Ovary (tissue), 10 donors: ENCODE measurements at regions of chrX and their contacts with region 1.

Region 1: GRCh38 chrX:73447311-73447794 is 500 bp downstream of the CDX4 start:
- DNase-seq: no peak
- H3K4me3 ChIP-seq: no peak overlapping the region
- H3K27ac ChIP-seq: no peak overlapping the region
- H3K4me1 ChIP-seq: no peaks in the 10 kb centered on the region
- H3K27me3 ChIP-seq: no peaks in the 10 kb centered on the region
- CTCF ChIP-seq: no peak
- EP300 ChIP-seq: no peak
- POLR2A ChIP-seq: no peak

Region 2: GRCh38 chrX:73468376-73468775 is 21.0 kb after region 1 on chrX:
- intact Hi-C with region 1: loop called in 1 of 4 experiments (anchors 2 kb)
- DNase-seq: no peak
- H3K4me3 ChIP-seq: no peak overlapping the region
- H3K27ac ChIP-seq: no peak overlapping the region
- H3K4me1 ChIP-seq: no peaks in the 10 kb centered on the region
- H3K27me3 ChIP-seq: no peaks in the 10 kb centered on the region
- CTCF ChIP-seq: no peak
- EP300 ChIP-seq: no peak
- POLR2A ChIP-seq: no peak

Region 3: DNA sequence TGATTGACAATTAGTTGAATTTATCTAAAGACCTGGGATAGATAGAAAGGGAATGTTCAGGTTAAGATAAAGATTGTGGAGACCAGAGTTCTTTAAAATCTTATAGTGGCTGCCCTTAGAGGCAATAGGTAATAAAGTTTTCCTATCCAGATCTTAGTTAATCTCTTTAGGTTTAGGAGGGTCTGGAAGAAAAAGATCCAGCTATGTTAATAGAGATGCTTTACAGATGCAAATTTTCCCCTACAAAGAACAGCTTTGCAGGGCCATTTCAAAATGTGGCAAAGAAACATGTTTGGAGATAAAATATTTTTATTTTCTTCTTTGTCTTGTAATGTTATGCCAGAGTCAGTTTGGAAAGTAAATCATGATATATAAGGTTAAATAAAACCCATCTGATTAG is 61.5 kb after region 1 on chrX:
- intact Hi-C with region 1: loop called in 1 of 4 experiments (anchors 2 kb)
- DNase-seq: no peak
- H3K4me3 ChIP-seq: no peak overlapping the region
- H3K27ac ChIP-seq: no peak overlapping the region
- H3K4me1 ChIP-seq: no peaks in the 10 kb centered on the region
- H3K27me3 ChIP-seq: no peaks in the 10 kb centered on the region
- CTCF ChIP-seq: no peak
- EP300 ChIP-seq: no peak
- POLR2A ChIP-seq: no peak

Region 4: DNA sequence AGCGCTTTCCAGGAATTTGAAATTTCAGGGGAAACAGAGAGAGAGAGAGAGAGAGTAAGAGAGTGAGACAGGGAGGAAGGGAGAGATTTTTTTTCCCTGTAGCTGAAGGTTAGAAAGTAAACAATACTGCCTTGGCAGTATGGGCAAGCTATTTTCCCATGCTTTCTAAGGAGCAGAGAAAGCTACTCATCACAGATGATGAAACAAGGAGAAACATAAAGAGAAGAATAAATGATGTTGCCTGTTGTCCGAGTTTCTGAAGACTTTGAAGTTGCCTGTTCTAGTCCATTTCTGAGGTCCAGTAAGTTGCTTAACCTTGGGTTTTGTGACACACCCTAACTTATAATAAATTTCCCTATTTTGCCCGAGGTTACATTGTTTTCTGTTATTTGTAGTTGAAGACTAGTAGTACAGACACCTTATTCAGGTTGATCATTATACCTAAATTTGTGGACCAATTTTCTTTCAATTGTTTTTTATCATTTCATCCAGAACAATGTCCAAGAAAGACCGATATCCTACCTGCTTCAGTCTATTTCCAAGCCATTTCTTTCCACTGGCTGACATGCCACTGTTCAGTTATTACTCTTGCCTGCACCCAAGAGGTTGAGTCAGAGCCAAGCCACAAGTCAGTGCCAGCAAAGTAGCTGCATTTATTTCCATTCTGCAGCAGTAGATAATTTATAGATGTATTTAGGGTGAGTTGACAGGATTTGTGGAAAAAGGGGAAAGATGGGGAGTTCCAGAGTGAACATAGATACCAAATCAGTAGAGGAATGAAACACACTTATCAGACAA is 924.3 kb after region 1 on chrX:
- intact Hi-C with region 1: no loop called
- DNase-seq: no peak
- H3K4me3 ChIP-seq: no peak overlapping the region
- H3K27ac ChIP-seq: no peak overlapping the region
- H3K4me1 ChIP-seq: no peaks in the 10 kb centered on the region
- H3K27me3 ChIP-seq: no peaks in the 10 kb centered on the region
- CTCF ChIP-seq: no peak
- EP300 ChIP-seq: no peak
- POLR2A ChIP-seq: no peak